CD8-positive, alpha-beta memory T cell (primary cell): ENCODE measurements at regions of chr1 and their contacts with region 1.

Region 1: GRCh38 chr1:203006948-203007871 is at the start of gene TMEM183A:
- DNase-seq: peak; percentile 89 to 97 (median 92)
- H3K4me3 ChIP-seq: peak within 1 kb of the TSS; percentile 96
- H3K4me3 Mint-ChIP-seq: peak within 1 kb of the TSS; percentile 91 to 99 (median 96)
- H3K27ac ChIP-seq: peak within 1 kb of the TSS; percentile 90
- H3K27ac Mint-ChIP-seq: peak within 1 kb of the TSS; percentile 96 to 99 (median 98)
- H3K4me1 ChIP-seq: peaks cover 17% of the 10 kb centered on the region
- H3K4me1 Mint-ChIP-seq: peaks cover 29 to 46% (median 45%) of the 10 kb centered on the region in 3 donors
- H3K27me3 ChIP-seq: no peaks in the 10 kb centered on the region
- H3K27me3 Mint-ChIP-seq: no peaks in the 10 kb centered on the region
- total RNA-seq, gene TMEM183A: 76.9 to 77.2 TPM

Region 2: GRCh38 chr1:202765721-202766120 is 241.5 kb before region 1 on chr1:
- CTCF ChIA-PET with region 1: no interaction called
- POLR2A ChIA-PET with region 1: no interaction called
- DNase-seq: no peak
- H3K4me3 ChIP-seq: no peak overlapping the region
- H3K4me3 Mint-ChIP-seq: no peak overlapping the region
- H3K27ac ChIP-seq: no peak overlapping the region
- H3K27ac Mint-ChIP-seq: peak overlapping the region in 1 of 8 donors; percentile 11
- H3K4me1 ChIP-seq: no peaks in the 10 kb centered on the region
- H3K4me1 Mint-ChIP-seq: no peaks in the 10 kb centered on the region
- H3K27me3 ChIP-seq: no peaks in the 10 kb centered on the region
- H3K27me3 Mint-ChIP-seq: no peaks in the 10 kb centered on the region

Region 3: GRCh38 chr1:202888531-202889360 is 118.5 kb before region 1 on chr1 and contains the start of gene RABIF:
- CTCF ChIA-PET with region 1: no interaction called
- POLR2A ChIA-PET with region 1: interaction called, 10 read pairs
- DNase-seq: peak; percentile 95 to 98 (median 97)
- H3K4me3 ChIP-seq: peak within 1 kb of the TSS; percentile 92
- H3K4me3 Mint-ChIP-seq: peak within 1 kb of the TSS; percentile 91 to 99 (median 94)
- H3K27ac ChIP-seq: peak within 1 kb of the TSS; percentile 91
- H3K27ac Mint-ChIP-seq: peak within 1 kb of the TSS; percentile 90 to 100 (median 98)
- H3K4me1 ChIP-seq: peaks cover 16% of the 10 kb centered on the region
- H3K4me1 Mint-ChIP-seq: peaks cover 23 to 36% (median 29%) of the 10 kb centered on the region in 3 donors
- H3K27me3 ChIP-seq: no peaks in the 10 kb centered on the region
- H3K27me3 Mint-ChIP-seq: no peaks in the 10 kb centered on the region
- total RNA-seq, gene RABIF: 13.9 to 14.0 TPM

Region 4: GRCh38 chr1:203084588-203085502 is 77.6 kb after region 1 on chr1:
- CTCF ChIA-PET with region 1: no interaction called
- POLR2A ChIA-PET with region 1: no interaction called
- DNase-seq: no peak
- H3K4me3 ChIP-seq: no peak overlapping the region
- H3K4me3 Mint-ChIP-seq: no peak overlapping the region
- H3K27ac ChIP-seq: no peak overlapping the region
- H3K27ac Mint-ChIP-seq: no peak overlapping the region
- H3K4me1 ChIP-seq: no peaks in the 10 kb centered on the region
- H3K4me1 Mint-ChIP-seq: no peaks in the 10 kb centered on the region
- H3K27me3 ChIP-seq: no peaks in the 10 kb centered on the region
- H3K27me3 Mint-ChIP-seq: peaks cover 14 to 34% of the 10 kb centered on the region in 2 donors